ENCODE measurements at regions of chr20 and their contacts with region 1.

Region 1: DNA sequence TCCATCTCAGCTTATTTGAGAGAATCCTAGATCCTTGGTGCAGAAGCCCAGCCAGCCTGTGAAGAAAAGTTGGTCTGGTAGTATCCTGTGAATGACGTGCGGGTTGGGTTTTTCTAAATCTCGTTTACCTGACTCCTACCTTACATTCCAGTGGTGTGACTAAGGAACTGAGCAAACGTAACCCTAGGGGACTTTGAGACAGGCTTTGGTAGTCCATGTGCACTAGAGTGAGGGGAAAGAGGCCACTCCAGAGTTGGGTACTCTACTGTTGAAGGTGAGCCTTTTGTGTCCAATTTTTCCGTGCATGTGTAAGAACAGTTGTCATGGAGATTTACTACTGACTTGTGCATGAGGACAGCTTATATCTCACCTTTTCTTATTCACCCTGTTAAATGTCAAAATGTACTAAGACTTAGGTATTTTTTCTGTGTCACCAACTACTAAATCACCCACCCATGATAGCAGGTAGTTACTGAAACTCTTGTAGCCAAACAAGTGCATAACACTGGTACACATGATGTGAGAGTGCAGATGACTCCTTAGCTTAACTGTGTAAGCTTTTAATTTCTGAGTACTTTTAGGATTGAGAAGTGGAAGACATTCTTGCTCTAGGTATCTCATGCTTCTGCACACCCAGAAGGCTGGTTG is 26.3 kb upstream of the PLCG1 start:
- DNase-seq: peak; percentile 88 to 90
- H3K4me3 ChIP-seq: no peak overlapping the region
- H3K4me3 Mint-ChIP-seq: peak overlapping the region; percentile 42
- H3K27ac Mint-ChIP-seq: peak overlapping the region; percentile 91
- H3K4me1 ChIP-seq: peaks cover 30% of the 10 kb centered on the region
- H3K4me1 Mint-ChIP-seq: peaks cover 30% of the 10 kb centered on the region
- H3K27me3 ChIP-seq: no peaks in the 10 kb centered on the region
- H3K27me3 Mint-ChIP-seq: no peaks in the 10 kb centered on the region
- CTCF ChIP-seq: no peak

Region 2: DNA sequence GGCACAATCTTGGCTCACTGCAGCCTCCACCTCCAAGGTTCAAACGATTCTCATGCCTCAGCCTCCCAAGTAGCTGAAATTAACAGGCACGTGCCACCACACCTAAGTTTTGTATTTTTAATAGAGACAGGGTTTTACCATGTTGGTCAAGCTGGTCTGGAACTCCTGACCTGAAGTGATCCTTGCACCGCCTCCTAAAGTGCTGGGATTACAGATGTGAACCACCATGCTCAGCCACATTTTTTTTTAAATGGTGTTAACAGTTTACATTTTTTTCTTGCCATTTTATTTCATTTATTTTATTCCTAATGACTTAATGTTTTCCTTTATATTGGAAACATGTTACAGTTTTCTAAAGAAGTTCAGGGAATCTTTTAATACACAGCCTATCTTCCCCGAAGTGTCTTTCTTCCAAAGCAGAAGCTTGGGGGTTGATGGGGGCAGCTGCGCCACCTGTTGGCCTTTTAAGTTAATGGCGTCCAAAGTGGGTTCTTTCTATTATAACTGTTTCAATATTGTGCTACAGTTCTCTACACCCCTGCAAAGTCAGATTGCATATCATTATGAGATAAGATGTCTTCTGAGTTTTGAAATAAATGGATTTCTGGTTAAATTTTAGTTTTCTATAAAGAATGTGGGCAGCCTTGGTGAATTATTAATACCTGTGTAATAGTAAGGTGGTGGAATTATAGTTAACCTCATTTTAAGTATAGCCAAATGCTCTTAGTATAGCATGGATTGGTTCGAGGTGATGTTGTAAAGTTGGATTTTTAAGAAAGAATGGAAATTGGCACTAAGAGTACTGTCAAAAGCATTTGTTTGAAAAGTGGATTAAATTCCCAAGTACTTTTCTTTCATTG is 15.7 kb before region 1 on chr20:
- CTCF ChIA-PET with region 1: no interaction called
- POLR2A ChIA-PET with region 1: no interaction called
- intact Hi-C with region 1: loop called (anchors 1 kb)
- DNase-seq: peak; percentile 66 to 75
- H3K4me3 ChIP-seq: no peak overlapping the region
- H3K4me3 Mint-ChIP-seq: no peak overlapping the region
- H3K27ac Mint-ChIP-seq: no peak overlapping the region
- H3K4me1 ChIP-seq: no peaks in the 10 kb centered on the region
- H3K4me1 Mint-ChIP-seq: no peaks in the 10 kb centered on the region
- H3K27me3 ChIP-seq: no peaks in the 10 kb centered on the region
- H3K27me3 Mint-ChIP-seq: no peaks in the 10 kb centered on the region
- CTCF ChIP-seq: peak; percentile 98 to 99

Measured in Caco-2 (cell line).